Heart right ventricle (tissue), 16 donors: ENCODE measurements at regions of chr11 and their contacts with region 1.

Region 1: GRCh38 chr11:82682003-82682751 is 51.5 kb downstream of the FAM181B start:
- DNase-seq: peak in 1 of 2 donors; percentile 35
- ATAC-seq: peak; percentile 42 to 85 (median 74)
- H3K4me3 ChIP-seq: no peak overlapping the region
- H3K27ac ChIP-seq: no peak overlapping the region
- H3K4me1 ChIP-seq: no peaks in the 10 kb centered on the region
- H3K27me3 ChIP-seq: peaks cover 0 to 25% (median 9%) of the 10 kb centered on the region in 7 donors
- CTCF ChIP-seq: peak; percentile 32 to 74 (median 60)

Region 2: GRCh38 chr11:82698576-82699352 is 16.6 kb after region 1 on chr11:
- intact Hi-C with region 1: loop called in 1 of 10 experiments (anchors 1 kb)
- DNase-seq: no peak
- ATAC-seq: no peak
- H3K4me3 ChIP-seq: no peak overlapping the region
- H3K27ac ChIP-seq: no peak overlapping the region
- H3K4me1 ChIP-seq: no peaks in the 10 kb centered on the region
- H3K27me3 ChIP-seq: peaks cover 0 to 17% (median 6%) of the 10 kb centered on the region in 7 donors
- CTCF ChIP-seq: no peak